ENCODE measurements at regions of chr1 and their contacts with region 1.

Region 1: DNA sequence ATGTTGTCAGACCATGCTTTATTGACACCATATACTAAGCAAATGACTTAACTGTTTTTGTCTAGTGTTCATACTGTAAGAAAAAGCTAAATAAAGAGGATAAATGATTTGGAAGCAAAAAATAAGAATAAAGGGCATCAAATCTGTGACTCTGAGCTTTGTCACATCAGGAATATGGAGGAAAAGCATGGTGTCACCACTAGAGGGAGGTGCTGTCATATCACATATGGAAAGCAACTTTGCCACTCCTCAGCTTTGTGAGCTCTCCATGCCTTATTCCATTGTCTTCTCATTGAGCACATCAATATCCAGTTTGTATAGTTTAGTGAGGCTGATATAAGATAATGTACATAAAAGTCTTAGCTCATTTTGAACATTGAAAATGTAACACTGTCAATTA is 20.8 kb upstream of the GBP1 start:
- DNase-seq: peak; percentile 56
- ATAC-seq: peak; percentile 91
- H3K4me3 ChIP-seq: no peak overlapping the region
- H3K27ac ChIP-seq: no peak overlapping the region
- H3K4me1 ChIP-seq: no peaks in the 10 kb centered on the region
- H3K27me3 ChIP-seq: no peaks in the 10 kb centered on the region
- CTCF ChIP-seq: peak; percentile 72
- POLR2A ChIP-seq: no peak
- RAD21 ChIP-seq: peak; percentile 69

Region 2: GRCh38 chr1:89065079-89065868 is 20.5 kb before region 1 on chr1 and contains the start of gene GBP1:
- CTCF ChIA-PET with region 1: interaction called, 11 read pairs
- POLR2A ChIA-PET with region 1: interaction called, 5 read pairs
- dilution Hi-C with region 1: no loop called
- in situ Hi-C with region 1: no loop called
- intact Hi-C with region 1: no loop called
- DNase-seq: peak; percentile 88
- ATAC-seq: peak; percentile 79
- H3K4me3 ChIP-seq: peak within 1 kb of the TSS; percentile 98
- H3K27ac ChIP-seq: peak within 1 kb of the TSS; percentile 100
- H3K4me1 ChIP-seq: peaks cover 5% of the 10 kb centered on the region
- H3K27me3 ChIP-seq: no peaks in the 10 kb centered on the region
- CTCF ChIP-seq: no peak
- POLR2A ChIP-seq: peak; percentile 40; the same call in 1 of the 2 replicates
- RAD21 ChIP-seq: no peak
- total RNA-seq, gene GBP1: 108 and 118 TPM in 2 replicates

Region 3: DNA sequence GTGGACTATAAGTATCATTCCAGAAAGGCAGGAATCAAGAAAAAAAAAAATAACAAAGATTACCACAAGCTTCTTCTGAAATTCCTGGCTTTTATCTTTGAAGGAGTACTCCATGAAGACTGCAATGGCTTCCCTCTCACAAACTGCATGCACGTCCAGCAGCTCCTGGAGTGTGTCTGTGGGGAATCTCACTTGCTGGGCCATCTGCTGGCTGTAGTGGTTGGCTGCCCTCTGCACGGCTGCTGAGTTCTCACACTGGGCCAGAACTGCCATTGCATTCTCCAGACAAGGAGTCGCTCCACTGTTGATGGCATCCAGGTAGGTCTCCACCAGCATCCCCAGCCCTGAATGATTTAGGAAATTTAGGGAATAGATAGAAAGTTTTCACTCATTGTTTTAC is 63.4 kb after region 1 on chr1:
- CTCF ChIA-PET with region 1: interaction called, 9 read pairs
- POLR2A ChIA-PET with region 1: no interaction called
- dilution Hi-C with region 1: no loop called
- in situ Hi-C with region 1: no loop called
- intact Hi-C with region 1: loop called (anchors 1 kb)
- DNase-seq: peak; percentile 43
- ATAC-seq: peak; percentile 88
- H3K4me3 ChIP-seq: no peak overlapping the region
- H3K27ac ChIP-seq: no peak overlapping the region
- H3K4me1 ChIP-seq: no peaks in the 10 kb centered on the region
- H3K27me3 ChIP-seq: no peaks in the 10 kb centered on the region
- CTCF ChIP-seq: peak; percentile 41
- POLR2A ChIP-seq: no peak
- RAD21 ChIP-seq: peak; percentile 42

Region 4: DNA sequence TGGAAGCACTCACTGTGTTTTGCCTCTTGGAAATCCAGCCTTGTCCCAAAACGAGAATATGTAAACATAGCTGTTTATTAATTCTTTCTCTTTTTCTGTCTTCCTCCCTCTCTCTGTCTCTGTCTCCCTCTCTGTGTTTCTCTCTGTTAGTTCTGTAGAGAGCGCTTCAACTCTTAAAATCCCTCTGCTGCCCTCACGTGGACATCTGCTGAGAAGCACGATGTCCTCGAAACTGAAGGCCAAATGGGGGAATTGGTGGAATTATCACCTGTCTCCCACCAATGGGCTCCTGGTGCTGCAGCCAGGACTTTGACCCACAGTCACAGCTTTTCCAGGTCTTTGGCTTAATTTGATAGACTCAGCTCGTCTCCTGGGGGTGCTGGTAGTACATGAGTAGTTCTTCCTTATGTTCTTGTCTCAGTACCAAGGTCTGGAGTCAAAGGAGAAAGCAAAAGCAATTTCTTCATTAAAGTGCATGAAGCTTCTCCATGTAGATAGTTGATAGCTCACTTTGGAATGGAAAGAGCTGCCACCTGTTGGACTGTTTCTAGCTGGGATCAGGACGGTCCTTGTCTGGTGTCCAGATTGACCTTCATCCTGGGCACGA is 272.6 kb after region 1 on chr1:
- CTCF ChIA-PET with region 1: interaction called, 15 read pairs
- POLR2A ChIA-PET with region 1: no interaction called
- dilution Hi-C with region 1: no loop called
- in situ Hi-C with region 1: no loop called
- intact Hi-C with region 1: loop called (anchors 1 kb)
- DNase-seq: peak; percentile 65
- ATAC-seq: peak; percentile 96
- H3K4me3 ChIP-seq: no peak overlapping the region
- H3K27ac ChIP-seq: no peak overlapping the region
- H3K4me1 ChIP-seq: no peaks in the 10 kb centered on the region
- H3K27me3 ChIP-seq: peaks cover 2% of the 10 kb centered on the region; the same call in 1 of the 2 replicates
- CTCF ChIP-seq: peak; percentile 78
- POLR2A ChIP-seq: no peak
- RAD21 ChIP-seq: peak; percentile 74